ENCODE measurements at regions of chr7 and their contacts with region 1.

Region 1: DNA sequence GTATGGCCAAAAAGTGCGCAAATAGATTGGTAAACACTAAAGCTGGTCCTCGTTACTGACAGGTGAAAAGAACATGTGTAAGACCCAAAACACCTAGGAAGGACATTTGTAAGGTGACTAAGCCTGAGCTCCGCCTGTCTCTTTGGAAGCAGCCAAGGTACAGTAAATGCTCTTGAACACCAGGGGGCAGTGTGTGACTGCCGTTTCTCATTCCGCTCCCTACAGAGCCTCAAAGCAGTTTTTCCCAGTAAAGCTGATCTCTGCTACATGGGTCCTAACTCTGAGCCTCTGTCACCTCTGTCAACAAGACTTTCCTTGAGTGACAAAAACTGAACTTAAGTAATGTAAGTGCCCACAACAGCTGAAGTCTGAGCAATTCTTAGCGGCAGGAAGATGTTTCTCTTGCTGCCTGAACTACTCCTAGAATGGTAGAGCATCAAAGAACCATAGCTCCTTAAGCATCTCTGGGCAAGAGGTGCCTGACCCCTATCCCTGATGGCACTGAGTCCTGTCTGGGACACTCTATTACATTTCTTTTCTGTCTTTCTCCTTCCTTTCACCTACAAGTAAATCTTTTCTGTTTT is 238.0 kb upstream of the INHBA start:
- DNase-seq: peak in 2 of 3 donors; percentile 44 to 73
- ATAC-seq: peak; percentile 80
- H3K4me3 ChIP-seq: no peak overlapping the region
- H3K4me1 ChIP-seq: peaks cover 9% of the 10 kb centered on the region
- CTCF ChIP-seq: peak; percentile 81

Region 2: DNA sequence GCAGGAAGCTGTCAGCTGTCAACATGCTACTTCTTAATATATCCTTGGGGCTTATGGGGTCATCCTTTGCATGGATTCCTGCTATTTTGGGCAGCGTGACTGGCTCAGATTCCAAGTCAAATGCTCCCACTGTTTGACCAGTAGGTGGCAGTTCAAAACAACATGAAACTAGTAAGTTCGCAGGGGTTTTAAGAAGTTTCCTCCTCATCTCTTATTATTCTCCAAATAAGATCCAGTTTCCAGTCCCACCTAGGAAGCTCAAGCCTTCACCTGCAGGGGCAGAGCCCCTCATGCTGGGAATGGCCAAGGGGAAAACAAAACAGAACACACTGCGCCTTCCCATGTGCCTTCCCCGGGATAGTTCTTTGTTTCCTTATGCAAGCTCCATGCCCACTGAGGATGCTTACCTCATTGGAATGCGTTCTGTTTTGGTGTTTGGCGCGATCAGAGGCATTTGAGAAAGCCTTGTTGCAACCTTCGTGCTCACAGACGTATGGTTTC is 36.3 kb after region 1 on chr7:
- intact Hi-C with region 1: loop called in 1 of 2 experiments (anchors 5 kb)
- DNase-seq: peak in 1 of 3 donors; percentile 31
- ATAC-seq: peak; percentile 26
- H3K4me3 ChIP-seq: no peak overlapping the region
- H3K4me1 ChIP-seq: no peaks in the 10 kb centered on the region
- CTCF ChIP-seq: peak; percentile 32

Region 3: GRCh38 chr7:42843205-42843800 is 902.5 kb after region 1 on chr7:
- intact Hi-C with region 1: loop called in 1 of 2 experiments (anchors 2 kb)
- DNase-seq: peak in 1 of 3 donors; percentile 32
- ATAC-seq: peak; percentile 49
- H3K4me3 ChIP-seq: no peak overlapping the region
- H3K4me1 ChIP-seq: no peaks in the 10 kb centered on the region
- CTCF ChIP-seq: no peak

Measured in mucosa of descending colon (tissue), 3 donors.